Mammary epithelial cell (primary cell): ENCODE measurements at regions of chr19 and their contacts with region 1.

Region 1: GRCh38 chr19:49640113-49640898 is at the start of gene RRAS:
- DNase-seq: peak; percentile 100
- H3K4me3 ChIP-seq: peak within 1 kb of the TSS; percentile 56 to 87 (median 61)
- H3K27ac ChIP-seq: peak within 1 kb of the TSS; percentile 100
- H3K4me1 ChIP-seq: peaks cover 27% of the 10 kb centered on the region
- H3K27me3 ChIP-seq: no peaks in the 10 kb centered on the region
- CTCF ChIP-seq: no peak
- total RNA-seq, gene RRAS: 20.5 to 84.2 TPM

Region 2: DNA sequence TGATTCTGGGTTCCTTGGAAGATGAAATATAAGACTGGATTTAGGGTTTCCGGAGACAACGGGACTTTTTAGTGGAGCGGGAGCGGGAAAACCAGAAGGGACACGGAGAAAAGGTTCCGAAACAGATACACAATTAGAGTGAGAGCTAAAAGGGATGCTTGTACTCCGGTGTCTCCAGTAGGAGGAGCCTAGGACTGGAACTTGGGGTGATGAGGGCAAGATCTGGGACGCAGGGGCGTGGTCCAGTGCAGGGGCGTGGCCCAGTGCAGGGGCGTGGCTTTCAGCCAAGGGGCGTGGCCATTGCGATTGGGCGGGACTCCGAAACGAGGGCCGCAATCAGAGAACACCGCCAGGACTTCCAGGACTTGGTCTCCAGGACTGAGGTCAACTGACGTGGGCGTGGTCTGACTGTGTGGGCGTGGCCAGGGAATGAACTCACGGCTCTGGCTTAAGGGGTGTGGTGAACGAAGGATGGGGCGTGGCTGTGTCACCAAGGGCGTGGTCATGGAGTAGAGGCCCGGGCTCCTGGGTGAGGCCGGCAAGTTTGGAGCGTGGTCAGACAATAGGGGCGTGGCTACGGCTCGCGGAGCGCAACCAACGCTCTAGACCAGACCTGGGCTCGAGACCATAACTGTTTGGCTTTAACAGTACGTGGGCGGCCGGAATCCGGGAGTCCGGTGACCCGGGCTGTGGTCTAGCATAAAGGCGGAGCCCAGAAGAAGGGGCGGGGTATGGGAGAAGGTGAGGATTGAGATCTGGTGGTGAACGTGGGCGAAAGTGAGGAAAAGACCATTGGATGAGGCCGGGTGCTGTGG is 276.8 kb before region 1 on chr19 and contains the start of gene DKKL1:
- CTCF ChIA-PET with region 1: no interaction called
- dilution Hi-C with region 1: no loop called
- in situ Hi-C with region 1: no loop called
- intact Hi-C with region 1: loop called (anchors 5 kb)
- DNase-seq: peak; percentile 99
- H3K4me3 ChIP-seq: peak within 1 kb of the TSS; percentile 70 to 98 (median 77)
- H3K27ac ChIP-seq: peak within 1 kb of the TSS; percentile 51
- H3K4me1 ChIP-seq: peaks cover 4% of the 10 kb centered on the region
- H3K27me3 ChIP-seq: no peaks in the 10 kb centered on the region
- CTCF ChIP-seq: peak in 1 of 2 donors; percentile 38
- total RNA-seq, gene DKKL1: not detected

Region 3: DNA sequence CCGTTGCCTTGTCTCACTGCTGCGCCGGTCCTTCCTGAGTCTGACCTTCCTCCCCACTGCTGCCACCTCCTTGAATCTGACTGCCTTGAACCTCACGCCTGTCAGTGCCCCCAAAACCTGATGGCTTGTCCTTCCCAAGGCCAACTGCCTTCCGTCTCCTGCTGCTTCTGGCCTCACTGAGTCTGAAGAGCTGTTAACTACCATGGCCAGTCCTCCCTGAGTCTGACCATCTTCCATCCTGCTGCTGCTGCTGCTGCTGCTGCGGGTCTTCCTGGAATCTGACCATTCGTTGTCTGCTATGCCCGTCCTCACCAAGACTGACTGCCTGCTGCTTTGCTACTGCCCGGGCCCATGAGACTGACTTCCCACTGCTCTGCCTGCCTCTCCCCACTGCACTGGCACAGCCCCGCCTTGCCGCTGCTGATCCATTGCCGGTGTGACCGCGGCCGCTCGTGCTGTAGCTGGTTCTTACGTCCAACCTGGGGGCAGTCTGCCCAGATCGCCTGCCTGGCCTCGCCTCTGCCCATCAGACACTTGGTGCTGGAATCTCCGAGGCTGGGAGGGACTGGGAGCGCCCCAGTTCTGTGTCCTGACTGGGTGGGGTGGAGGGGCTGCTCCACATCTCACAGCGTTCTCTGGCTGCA is 115.4 kb before region 1 on chr19:
- CTCF ChIA-PET with region 1: no interaction called
- dilution Hi-C with region 1: no loop called
- in situ Hi-C with region 1: no loop called
- intact Hi-C with region 1: no loop called
- DNase-seq: no peak
- H3K4me3 ChIP-seq: no peak overlapping the region
- H3K27ac ChIP-seq: no peak overlapping the region
- H3K4me1 ChIP-seq: peaks cover 3% of the 10 kb centered on the region
- H3K27me3 ChIP-seq: no peaks in the 10 kb centered on the region
- CTCF ChIP-seq: no peak

Region 4: GRCh38 chr19:49570138-49570856 is 70.0 kb before region 1 on chr19:
- CTCF ChIA-PET with region 1: no interaction called
- dilution Hi-C with region 1: loop called (anchors 5 kb)
- in situ Hi-C with region 1: no loop called
- intact Hi-C with region 1: no loop called
- DNase-seq: peak; percentile 58
- H3K4me3 ChIP-seq: no peak overlapping the region
- H3K27ac ChIP-seq: no peak overlapping the region
- H3K4me1 ChIP-seq: peaks cover 3% of the 10 kb centered on the region
- H3K27me3 ChIP-seq: no peaks in the 10 kb centered on the region
- CTCF ChIP-seq: peak; percentile 99 to 100

Region 5: DNA sequence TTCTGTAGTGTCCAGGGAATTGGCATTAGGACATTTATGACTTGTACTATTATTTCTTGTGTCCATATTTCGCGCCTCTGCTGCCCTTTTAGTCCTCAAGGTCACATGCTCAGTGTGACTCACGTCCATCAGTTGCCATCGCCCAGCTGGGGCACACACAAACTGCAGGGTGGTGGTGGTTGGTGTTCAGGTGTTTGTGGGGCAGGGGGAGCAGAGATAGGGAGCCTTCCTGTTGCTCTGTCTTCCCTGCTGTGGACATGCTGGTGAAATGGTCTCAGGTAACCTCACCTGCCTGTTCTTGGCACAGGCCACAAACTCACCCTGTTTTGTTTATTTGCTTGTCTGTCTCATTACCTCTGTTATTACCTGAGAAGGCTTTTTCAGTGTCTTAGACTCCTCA is 26.9 kb before region 1 on chr19:
- CTCF ChIA-PET with region 1: no interaction called
- dilution Hi-C with region 1: no loop called
- in situ Hi-C with region 1: no loop called
- intact Hi-C with region 1: loop called (anchors 2 kb)
- DNase-seq: no peak
- H3K4me3 ChIP-seq: no peak overlapping the region
- H3K27ac ChIP-seq: no peak overlapping the region
- H3K4me1 ChIP-seq: peaks cover 13% of the 10 kb centered on the region
- H3K27me3 ChIP-seq: no peaks in the 10 kb centered on the region
- CTCF ChIP-seq: no peak

Region 6: GRCh38 chr19:49658566-49659442 is 18.5 kb after region 1 on chr19:
- CTCF ChIA-PET with region 1: no interaction called
- dilution Hi-C with region 1: no loop called
- in situ Hi-C with region 1: no loop called
- intact Hi-C with region 1: no loop called
- DNase-seq: no peak
- H3K4me3 ChIP-seq: no peak overlapping the region
- H3K27ac ChIP-seq: no peak overlapping the region
- H3K4me1 ChIP-seq: no peaks in the 10 kb centered on the region
- H3K27me3 ChIP-seq: no peaks in the 10 kb centered on the region
- CTCF ChIP-seq: no peak

Region 7: DNA sequence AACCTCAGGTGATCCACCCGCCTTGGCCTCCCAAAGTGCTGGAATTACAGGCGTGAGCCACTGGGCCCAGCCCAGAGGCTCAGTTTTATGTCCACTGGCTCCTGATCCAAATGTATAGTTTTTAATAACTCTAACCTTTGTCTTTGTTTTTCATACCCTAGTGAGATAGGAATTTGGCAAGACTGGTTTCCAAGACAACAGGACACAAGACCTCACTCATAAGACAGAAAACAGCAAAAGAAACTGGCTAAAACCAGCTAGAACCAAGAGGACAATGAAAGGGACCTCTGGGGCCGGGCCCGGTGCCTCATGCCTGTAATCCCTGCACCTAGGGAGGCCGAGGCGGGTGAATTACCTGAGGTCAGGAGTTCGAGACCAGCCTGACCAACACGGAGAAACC is 78.2 kb after region 1 on chr19:
- CTCF ChIA-PET with region 1: no interaction called
- dilution Hi-C with region 1: loop called (anchors 5 kb)
- in situ Hi-C with region 1: no loop called
- intact Hi-C with region 1: no loop called
- DNase-seq: no peak
- H3K4me3 ChIP-seq: no peak overlapping the region
- H3K27ac ChIP-seq: no peak overlapping the region
- H3K4me1 ChIP-seq: no peaks in the 10 kb centered on the region
- H3K27me3 ChIP-seq: no peaks in the 10 kb centered on the region
- CTCF ChIP-seq: no peak

Region 8: DNA sequence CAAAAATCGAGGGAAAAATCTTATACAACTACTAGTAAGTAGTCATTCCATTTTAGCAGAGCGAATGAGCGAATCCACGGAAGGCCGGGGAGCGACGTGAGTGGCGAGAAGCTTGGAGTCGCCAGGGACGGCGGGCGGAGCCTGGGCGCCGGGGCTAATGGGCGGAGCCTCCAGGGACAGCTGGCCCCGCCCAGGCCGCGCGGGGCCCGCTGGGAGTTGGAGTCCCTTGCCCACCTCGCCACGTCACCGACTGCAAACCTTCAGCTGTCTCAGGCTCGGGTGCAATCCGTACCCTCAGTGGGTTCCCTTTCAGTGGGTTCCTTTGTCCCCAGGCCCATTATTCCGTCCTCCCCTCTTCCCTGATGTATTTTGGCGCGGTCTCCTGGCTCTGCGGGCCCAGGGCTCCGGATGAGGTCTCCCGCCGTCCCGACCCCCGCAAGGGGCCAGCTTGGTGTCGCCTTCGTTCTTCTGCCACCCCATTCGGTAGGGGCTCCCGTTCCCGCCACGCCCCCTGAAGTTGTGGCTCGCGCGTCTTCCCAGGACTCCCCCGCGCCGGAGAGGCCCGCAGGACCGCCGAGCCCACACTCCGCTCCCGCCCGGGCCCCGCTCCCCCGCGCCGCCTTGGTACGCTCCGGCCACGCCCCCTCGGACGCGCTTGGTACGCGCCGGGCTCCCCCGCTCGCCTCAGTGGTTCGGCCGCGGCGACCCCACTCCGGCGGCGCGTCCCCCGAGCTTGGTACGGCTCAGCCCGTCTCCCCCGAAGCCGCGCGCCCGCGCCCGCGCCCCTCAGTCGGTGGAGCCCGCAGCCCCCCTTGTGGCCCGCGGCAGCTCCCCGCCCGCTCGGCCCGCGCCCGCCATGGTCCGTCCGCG is 210.4 kb after region 1 on chr19 and contains the start of gene PTOV1:
- CTCF ChIA-PET with region 1: no interaction called
- dilution Hi-C with region 1: no loop called
- in situ Hi-C with region 1: no loop called
- intact Hi-C with region 1: no loop called
- DNase-seq: peak; percentile 81
- H3K4me3 ChIP-seq: peak within 1 kb of the TSS; percentile 76 to 95 (median 95)
- H3K27ac ChIP-seq: peak within 1 kb of the TSS; percentile 79
- H3K4me1 ChIP-seq: peaks cover 42% of the 10 kb centered on the region
- H3K27me3 ChIP-seq: no peaks in the 10 kb centered on the region
- CTCF ChIP-seq: no peak
- total RNA-seq, gene PTOV1: 28.8 to 85.6 TPM

Region 9: DNA sequence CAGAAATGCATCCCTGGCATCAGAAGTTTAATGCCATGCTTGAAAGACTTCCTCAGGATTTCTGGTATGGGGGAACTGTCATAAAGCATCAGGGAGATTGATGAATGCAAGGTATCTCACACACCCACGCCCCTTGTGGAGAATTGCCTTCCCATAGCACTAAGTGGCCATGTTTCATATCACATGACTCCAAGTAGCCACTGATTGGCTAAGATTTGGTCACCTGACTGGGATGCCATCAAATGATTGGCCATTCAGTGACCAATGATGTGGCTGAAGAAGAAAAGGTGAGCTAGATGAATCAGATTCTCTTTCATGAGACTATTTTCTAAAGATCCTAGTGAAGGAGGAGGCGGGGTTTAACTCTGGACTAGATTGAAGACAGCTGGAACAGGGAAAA is 1353.8 kb after region 1 on chr19:
- CTCF ChIA-PET with region 1: no interaction called
- dilution Hi-C with region 1: no loop called
- in situ Hi-C with region 1: no loop called
- intact Hi-C with region 1: loop called (anchors 5 kb)
- DNase-seq: peak; percentile 61
- H3K4me3 ChIP-seq: no peak overlapping the region
- H3K27ac ChIP-seq: peak overlapping the region; percentile 98
- H3K4me1 ChIP-seq: peaks cover 29% of the 10 kb centered on the region
- H3K27me3 ChIP-seq: no peaks in the 10 kb centered on the region
- CTCF ChIP-seq: no peak